ENCODE measurements at regions of chr20 and their contacts with region 1.

Region 1: GRCh38 chr20:41232973-41233926 is 84.3 kb downstream of the ZHX3 start:
- DNase-seq: no peak
- H3K4me3 ChIP-seq: no peak overlapping the region
- H3K27ac ChIP-seq: peak overlapping the region; percentile 85 to 89
- H3K4me1 ChIP-seq: peaks cover 8 to 53% of the 10 kb centered on the region in 2 donors
- H3K27me3 ChIP-seq: no peaks in the 10 kb centered on the region
- CTCF ChIP-seq: no peak

Region 2: GRCh38 chr20:41028348-41029148 is 204.7 kb before region 1 on chr20 and contains the start of gene TOP1:
- intact Hi-C with region 1: loop called (anchors 5 kb)
- DNase-seq: peak; percentile 100
- H3K4me3 ChIP-seq: peak within 1 kb of the TSS; percentile 90 to 99
- H3K27ac ChIP-seq: peak within 1 kb of the TSS; percentile 95 to 100
- H3K4me1 ChIP-seq: peaks cover 10 to 34% of the 10 kb centered on the region in 2 donors
- H3K27me3 ChIP-seq: no peaks in the 10 kb centered on the region
- CTCF ChIP-seq: peak in 1 of 3 experiments; percentile 10
- total RNA-seq, gene TOP1: 9.4 TPM

Region 3: GRCh38 chr20:41136680-41137613 is 96.3 kb before region 1 on chr20 and contains the start of gene PLCG1:
- intact Hi-C with region 1: loop called (anchors 1 kb)
- DNase-seq: peak; percentile 46 to 94
- H3K4me3 ChIP-seq: peak within 1 kb of the TSS; percentile 86 to 99
- H3K27ac ChIP-seq: peak within 1 kb of the TSS; percentile 98
- H3K4me1 ChIP-seq: peaks cover 0 to 35% of the 10 kb centered on the region in 2 donors
- H3K27me3 ChIP-seq: no peaks in the 10 kb centered on the region
- CTCF ChIP-seq: peak in 1 of 3 experiments; percentile 20
- total RNA-seq, gene PLCG1: 168 TPM

Region 4: DNA sequence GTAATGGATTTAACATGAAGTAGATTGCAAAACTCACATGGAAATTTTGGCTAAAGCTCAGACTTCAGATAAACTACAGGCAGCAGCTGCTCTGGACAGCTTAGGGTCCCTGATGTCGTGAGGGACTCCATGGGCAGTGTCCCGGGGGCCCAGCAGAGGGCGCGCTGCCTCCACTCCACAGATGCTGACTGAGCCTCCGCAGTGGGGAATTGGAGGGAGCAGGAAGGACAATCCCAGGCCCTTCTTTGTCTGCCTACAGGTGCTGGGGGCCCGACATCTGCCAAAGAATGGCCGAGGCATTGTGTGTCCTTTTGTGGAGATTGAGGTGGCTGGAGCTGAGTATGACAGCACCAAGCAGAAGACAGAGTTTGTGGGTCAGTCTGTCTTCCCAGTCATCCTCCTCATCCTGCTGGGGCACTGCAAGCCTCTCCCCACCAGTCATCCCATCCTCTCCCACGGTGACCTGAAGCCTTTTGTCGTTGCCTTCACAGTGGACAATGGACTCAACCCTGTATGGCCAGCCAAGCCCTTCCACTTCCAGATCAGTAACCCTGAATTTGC is 60.0 kb before region 1 on chr20:
- intact Hi-C with region 1: loop called (anchors 1 kb)
- DNase-seq: peak; percentile 40 to 91
- H3K4me3 ChIP-seq: no peak overlapping the region
- H3K27ac ChIP-seq: peak overlapping the region; percentile 82 to 83
- H3K4me1 ChIP-seq: peaks cover 8 to 54% of the 10 kb centered on the region in 2 donors
- H3K27me3 ChIP-seq: no peaks in the 10 kb centered on the region
- CTCF ChIP-seq: peak; percentile 86 to 96 (median 90)

Region 5: GRCh38 chr20:41249406-41250281 is 16.4 kb after region 1 on chr20:
- intact Hi-C with region 1: loop called (anchors 2 kb)
- DNase-seq: peak; percentile 46 to 93
- H3K4me3 ChIP-seq: no peak overlapping the region
- H3K27ac ChIP-seq: peak overlapping the region; percentile 99
- H3K4me1 ChIP-seq: peaks cover 33 to 63% of the 10 kb centered on the region in 2 donors
- H3K27me3 ChIP-seq: no peaks in the 10 kb centered on the region
- CTCF ChIP-seq: peak in 2 of 3 experiments; percentile 2 to 22

Region 6: GRCh38 chr20:41317536-41318270 is 84.5 kb after region 1 on chr20 and contains the start of gene ZHX3:
- intact Hi-C with region 1: loop called (anchors 5 kb)
- DNase-seq: peak; percentile 85 to 98
- H3K4me3 ChIP-seq: peak within 1 kb of the TSS; percentile 94
- H3K27ac ChIP-seq: peak within 1 kb of the TSS; percentile 87 to 90
- H3K4me1 ChIP-seq: peaks cover 0 to 22% of the 10 kb centered on the region in 2 donors
- H3K27me3 ChIP-seq: no peaks in the 10 kb centered on the region
- CTCF ChIP-seq: no peak
- total RNA-seq, gene ZHX3: 53.3 TPM

Region 7: DNA sequence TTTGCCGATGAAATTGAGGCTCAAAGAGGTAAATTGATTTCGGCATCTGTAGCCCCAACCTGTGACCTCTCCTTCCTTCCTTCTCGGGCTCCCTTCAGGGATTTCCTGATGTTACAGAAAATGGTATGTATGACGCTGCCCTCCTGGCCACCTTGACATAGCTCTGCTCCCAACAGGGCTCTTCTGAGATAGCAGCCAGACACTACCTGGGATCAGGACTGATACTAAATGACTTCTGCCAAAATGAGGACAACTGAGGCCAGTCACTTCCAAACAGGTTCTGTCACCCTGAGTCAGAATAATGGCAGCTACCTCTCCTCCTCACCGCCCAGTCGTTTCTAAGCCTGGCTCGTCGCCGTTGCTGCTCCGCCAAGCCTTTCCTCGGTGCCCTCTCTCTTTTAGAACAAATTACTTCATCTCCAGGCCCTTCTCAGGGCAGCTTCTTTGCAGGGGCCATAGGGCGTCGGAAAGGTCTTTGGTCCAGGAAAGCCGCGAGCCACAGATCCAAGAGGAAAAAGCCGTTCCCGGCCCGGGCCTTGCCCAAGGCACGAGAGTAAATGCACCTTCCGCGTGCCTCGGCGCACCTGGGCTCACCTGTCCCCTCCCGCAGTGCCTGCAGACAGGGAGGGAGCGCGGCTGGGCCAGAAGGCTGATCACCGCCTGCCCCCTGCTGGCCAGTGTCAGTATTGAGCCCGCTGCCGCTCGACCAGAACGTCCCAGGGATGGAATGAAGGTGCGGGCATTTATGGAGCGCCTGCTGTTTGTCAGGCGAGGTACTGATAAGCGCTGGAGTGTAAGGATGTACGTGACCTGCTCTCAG is 106.5 kb after region 1 on chr20:
- intact Hi-C with region 1: loop called (anchors 1 kb)
- DNase-seq: peak in 1 of 2 donors; percentile 91
- H3K4me3 ChIP-seq: peak overlapping the region; percentile 48 to 55
- H3K27ac ChIP-seq: peak overlapping the region; percentile 81 to 82
- H3K4me1 ChIP-seq: peaks cover 4 to 9% of the 10 kb centered on the region in 2 donors
- H3K27me3 ChIP-seq: no peaks in the 10 kb centered on the region
- CTCF ChIP-seq: peak; percentile 98 to 99 (median 99)

Region 8: DNA sequence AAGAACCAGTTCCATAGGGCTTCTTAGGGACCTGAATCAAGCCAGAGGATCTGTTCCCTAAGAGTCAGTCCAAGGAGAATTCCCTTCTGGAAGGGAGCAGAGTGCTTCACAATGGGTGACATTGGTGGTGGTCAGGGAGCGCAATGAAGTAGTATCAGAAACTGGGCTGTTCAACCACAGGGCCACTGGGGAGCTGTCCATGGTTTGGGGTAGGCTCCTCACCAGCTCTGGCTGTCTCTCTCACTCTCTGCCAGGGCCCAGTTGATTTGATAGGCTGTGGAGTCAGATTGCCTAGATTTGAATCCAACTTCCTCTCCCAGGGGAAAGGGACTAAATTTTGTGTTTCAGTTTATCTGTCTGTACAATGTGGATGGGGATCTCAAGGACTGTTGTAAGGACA is 421.6 kb after region 1 on chr20:
- intact Hi-C with region 1: no loop called
- DNase-seq: no peak
- H3K4me3 ChIP-seq: no peak overlapping the region
- H3K27ac ChIP-seq: no peak overlapping the region
- H3K4me1 ChIP-seq: no peaks in the 10 kb centered on the region
- H3K27me3 ChIP-seq: no peaks in the 10 kb centered on the region
- CTCF ChIP-seq: no peak